ENCODE measurements at regions of chr22 and their contacts with region 1.

Region 1: DNA sequence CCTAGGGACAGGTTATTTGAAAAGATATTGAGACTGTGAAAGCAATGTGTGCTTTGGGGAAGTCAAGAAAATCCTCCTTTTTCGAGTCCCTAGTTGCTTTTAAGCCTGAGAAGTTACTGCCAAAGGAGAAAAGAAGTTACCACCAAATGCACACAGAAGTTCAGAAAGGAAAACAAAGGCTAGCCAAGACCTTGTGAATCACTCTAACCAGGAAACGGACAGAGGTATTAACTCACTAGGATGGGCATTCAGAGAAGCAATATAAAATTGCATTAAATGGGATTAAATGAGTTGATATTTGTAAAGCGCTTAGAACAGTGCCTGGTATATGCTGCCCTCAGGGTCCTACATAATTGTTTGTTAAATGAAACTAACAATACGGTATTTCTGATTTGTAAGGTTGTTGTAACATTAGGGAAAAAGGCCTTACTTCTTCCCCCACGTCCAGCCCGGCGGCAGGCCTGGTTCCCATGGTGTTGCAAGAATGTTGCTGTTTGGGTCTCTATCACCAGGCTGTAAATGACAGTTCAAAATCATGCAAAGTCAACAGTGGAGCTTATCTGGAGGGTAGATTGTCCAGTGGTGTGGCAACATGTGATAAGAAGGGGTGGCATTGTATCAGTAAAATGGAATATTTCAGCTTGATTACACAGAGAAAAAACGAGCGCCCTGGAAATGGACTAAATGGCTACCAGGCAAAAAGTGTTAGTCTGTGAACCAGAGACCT is 7.1 kb downstream of the TMA7B start:
- DNase-seq: no peak
- ATAC-seq: no peak
- H3K4me3 ChIP-seq: no peak overlapping the region
- H3K27ac ChIP-seq: no peak overlapping the region
- H3K4me1 ChIP-seq: peaks cover 0 to 21% (median 7%) of the 10 kb centered on the region in 9 donors
- H3K27me3 ChIP-seq: peaks cover 0 to 20% (median 3%) of the 10 kb centered on the region in 7 donors
- CTCF ChIP-seq: no peak

Region 2: DNA sequence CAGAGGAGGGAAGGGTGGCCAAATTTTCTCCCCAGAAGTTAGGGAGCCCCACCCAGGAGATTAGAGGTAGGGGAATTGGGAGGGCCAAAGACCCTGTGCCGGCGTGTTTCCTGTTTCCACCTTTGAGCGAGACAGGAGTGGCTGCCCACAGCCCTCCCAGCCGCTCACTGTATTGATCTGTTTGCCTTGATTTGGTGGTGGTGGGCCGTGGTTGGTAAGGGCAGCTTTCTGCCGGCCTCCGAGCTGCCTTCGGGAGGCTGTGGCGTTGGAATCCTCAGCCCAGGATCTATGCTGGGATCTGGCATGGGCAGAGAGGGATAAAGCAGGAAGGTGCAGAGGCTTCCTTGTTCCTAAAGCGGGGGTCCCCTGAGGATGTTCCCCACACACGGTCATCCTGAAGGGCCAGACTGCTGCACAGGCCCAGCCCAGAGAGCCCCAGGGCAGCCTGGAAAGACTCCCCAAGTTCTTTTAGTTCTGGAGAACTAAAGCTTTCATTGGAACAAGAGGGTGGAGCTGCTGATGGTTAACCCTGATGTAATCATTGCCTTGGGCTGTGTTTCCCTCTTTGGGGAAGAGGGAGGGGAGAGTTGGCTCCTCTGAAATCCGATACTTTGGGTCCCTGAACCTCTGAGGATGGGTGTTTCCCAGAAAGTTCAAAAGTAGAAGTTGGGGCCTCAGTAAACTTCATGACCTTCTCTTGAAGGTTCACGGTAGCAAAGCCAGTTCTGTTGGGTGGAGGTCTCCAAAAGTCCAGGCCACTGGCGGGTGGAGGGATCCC is 34.7 kb after region 1 on chr22:
- intact Hi-C with region 1: loop called in 1 of 10 experiments (anchors 1 kb)
- DNase-seq: no peak
- ATAC-seq: no peak
- H3K4me3 ChIP-seq: no peak overlapping the region
- H3K27ac ChIP-seq: no peak overlapping the region
- H3K4me1 ChIP-seq: peaks cover 0 to 21% (median 8%) of the 10 kb centered on the region in 9 donors
- H3K27me3 ChIP-seq: peaks cover 0 to 8% (median 0%) of the 10 kb centered on the region in 7 donors
- CTCF ChIP-seq: no peak

Measured in heart right ventricle (tissue), 16 donors.